Left cardiac atrium (tissue), 4 donors: ENCODE measurements at regions of chr1 and their contacts with region 1.

Region 1: DNA sequence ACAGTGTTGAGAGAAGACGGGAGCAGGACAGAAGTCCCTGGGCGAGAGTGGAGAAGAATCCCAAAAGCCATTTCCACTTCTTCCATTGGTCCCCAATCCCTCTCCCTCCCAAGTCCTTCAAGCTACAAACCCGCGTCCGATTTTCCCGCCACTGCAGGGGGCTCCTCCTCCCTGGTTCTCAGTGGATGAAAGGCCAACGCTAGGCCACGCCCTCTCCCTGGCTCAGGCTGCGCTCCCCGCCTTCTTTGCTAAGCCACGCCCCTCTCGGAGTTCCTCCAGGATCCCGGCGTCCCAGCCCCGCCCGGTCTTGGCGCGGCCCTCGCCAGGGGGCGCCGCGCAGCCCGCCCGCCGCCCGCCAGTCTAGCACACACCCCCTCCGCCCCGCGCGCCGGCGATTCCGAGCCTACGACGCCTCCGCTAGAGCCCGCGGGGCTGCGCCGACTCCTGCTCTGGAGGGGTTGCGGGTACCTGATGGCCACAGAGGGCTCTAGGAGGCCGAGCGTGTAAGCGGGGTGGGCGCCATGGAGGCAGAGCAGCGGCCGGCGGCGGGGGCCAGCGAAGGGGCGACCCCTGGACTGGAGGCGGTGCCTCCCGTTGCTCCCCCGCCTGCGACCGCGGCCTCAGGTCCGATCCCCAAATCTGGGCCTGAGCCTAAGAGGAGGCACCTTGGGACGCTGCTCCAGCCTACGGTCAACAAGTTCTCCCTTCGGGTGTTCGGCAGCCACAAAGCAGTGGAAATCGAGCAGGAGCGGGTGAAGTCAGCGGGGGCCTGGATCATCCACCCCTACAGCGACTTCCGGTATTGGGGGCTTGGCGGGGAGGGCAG is at the start of gene HCN3:
- DNase-seq: peak; percentile 99
- ATAC-seq: peak; percentile 88 to 89
- total RNA-seq, gene HCN3: 0.76 to 1.6 TPM

Region 2: GRCh38 chr1:155308493-155309422 is 31.5 kb after region 1 on chr1 and contains the start of gene FDPS:
- intact Hi-C with region 1: loop called in 1 of 2 experiments (anchors 2 kb)
- DNase-seq: peak; percentile 99
- ATAC-seq: peak; percentile 99
- total RNA-seq, gene FDPS: 92.9 to 128 TPM